ENCODE measurements at regions of chr19 and their contacts with region 1.

Region 1: DNA sequence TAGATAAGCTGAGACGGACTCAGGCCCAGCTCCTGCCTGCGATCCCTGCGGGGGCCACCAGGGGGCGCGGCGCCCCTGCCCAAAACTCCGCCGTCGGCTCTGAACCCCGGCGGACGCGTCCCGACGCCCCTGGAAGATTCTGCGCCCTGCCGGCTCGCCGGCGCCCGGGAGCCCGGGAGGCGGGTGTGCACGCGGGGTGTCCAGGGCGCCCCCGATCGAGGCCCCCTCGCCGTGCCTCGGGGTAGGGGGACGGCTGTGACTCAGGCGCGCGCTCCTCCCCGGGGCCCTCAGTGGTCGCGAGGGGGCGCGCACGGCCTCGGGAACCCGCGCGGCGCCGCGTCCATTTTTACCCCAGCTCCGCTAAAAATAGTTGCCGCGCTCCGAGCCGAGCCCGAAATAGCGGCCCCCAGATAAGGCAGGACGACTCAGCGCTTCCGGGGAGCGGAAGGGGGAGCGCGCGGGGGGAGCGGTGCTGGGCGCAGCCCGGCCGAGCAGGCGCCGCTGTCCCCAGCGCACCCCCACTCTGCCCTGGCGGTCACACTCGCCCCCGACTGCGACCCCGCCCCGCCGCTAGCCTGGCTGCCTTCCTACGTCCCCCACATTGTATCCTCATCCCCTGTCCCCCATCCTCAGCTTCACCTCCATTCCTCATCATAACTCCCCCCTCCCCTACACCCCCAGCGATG is 16.0 kb upstream of the ERCC1 start:
- DNase-seq: peak; percentile 90
- ATAC-seq: peak; percentile 81
- H3K4me3 Mint-ChIP-seq: peak overlapping the region; percentile 46
- H3K27ac Mint-ChIP-seq: peak overlapping the region; percentile 13
- H3K4me1 Mint-ChIP-seq: peaks cover 32% of the 10 kb centered on the region
- H3K27me3 Mint-ChIP-seq: no peaks in the 10 kb centered on the region
- CTCF ChIP-seq: peak; percentile 100

Region 2: DNA sequence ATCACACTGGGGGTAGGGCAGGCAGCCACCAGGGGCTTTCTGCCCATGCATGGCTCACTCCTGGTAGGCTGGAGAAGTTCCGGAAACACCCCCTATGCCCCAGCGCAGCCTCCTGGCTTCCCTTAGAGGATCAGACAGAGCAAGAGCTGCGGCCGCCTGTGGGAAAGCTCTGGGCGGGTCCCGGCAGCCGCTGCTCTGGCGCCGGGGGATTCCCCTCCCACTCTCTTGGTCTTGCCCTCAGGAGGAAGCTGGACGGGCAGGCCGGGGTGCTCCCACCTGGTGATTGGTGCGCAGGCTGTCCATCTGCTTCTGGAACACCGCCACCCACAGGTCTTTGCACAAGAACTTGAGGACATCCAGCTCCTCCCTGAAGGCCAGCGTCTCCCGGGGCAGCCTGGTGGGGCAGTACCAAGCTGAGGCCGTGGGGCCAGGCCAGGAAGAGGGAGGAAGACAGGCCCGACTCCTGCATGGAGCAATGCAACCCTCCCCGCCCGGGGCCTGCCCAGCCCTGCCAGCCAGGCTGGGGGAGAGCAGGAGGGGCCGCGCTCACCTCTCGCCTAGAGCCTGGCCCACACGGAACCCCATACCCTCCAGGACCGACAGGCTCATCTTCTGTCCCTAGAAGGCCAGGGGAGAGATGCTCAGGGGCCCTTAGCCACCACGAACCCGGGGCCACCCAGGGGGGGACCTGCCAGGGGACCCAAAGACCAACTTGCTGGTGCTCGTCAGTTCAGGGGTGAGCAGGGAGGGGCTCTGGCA is 275.0 kb before region 1 on chr19:
- CTCF ChIA-PET with region 1: no interaction called
- POLR2A ChIA-PET with region 1: no interaction called
- intact Hi-C with region 1: no loop called
- DNase-seq: peak; percentile 88
- ATAC-seq: peak; percentile 93
- H3K4me3 Mint-ChIP-seq: no peak overlapping the region
- H3K27ac Mint-ChIP-seq: peak overlapping the region; percentile 55
- H3K4me1 Mint-ChIP-seq: peaks cover 14% of the 10 kb centered on the region
- H3K27me3 Mint-ChIP-seq: no peaks in the 10 kb centered on the region
- CTCF ChIP-seq: no peak

Region 3: DNA sequence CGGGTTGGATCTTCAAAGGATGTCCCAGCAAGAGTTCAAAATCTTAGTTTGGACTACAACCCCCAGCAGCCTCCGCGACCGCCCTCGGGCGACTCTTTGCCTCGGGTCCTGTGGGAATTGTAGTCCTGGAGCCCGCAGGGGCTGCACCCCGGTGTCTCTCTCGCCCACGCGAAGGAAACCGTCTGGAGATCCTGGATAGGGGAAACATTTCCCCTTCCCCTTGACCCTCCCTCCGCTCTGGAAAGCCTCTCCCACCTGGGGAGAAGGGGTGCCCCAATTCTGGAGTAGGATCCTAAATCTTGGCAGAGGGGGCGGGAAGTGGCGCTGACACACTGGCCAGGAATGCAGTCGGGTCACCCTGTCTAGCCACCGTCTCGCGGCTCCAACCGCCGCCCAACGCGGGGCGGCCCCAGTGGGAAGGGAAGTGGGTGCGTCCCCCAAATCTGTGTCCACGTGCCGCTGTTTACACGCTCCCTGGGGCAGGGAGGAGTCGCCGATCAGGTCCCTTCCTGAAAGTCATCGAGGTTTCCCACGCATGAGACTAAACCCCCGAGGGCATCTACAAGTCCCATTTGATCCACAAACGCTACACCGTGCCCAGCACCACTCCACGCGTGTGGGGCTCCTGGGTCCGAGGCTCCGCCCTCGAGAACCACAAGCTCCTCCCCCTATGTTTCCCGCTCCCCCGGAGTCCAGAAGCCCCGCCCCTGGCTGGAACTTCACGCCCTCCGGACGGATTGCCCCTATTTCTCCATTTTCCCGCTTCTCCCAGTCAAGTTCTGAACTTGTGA is 34.1 kb before region 1 on chr19:
- CTCF ChIA-PET with region 1: interaction called, 10 read pairs
- POLR2A ChIA-PET with region 1: interaction called, 4 read pairs
- intact Hi-C with region 1: no loop called
- DNase-seq: peak; percentile 92
- ATAC-seq: peak; percentile 59
- H3K4me3 Mint-ChIP-seq: peak overlapping the region; percentile 93
- H3K27ac Mint-ChIP-seq: peak overlapping the region; percentile 88
- H3K4me1 Mint-ChIP-seq: peaks cover 36% of the 10 kb centered on the region
- H3K27me3 Mint-ChIP-seq: peaks cover 26% of the 10 kb centered on the region
- CTCF ChIP-seq: no peak

Region 4: GRCh38 chr19:45450012-45450333 is 10.3 kb after region 1 on chr19:
- CTCF ChIA-PET with region 1: interaction called, 36 read pairs
- POLR2A ChIA-PET with region 1: interaction called, 15 read pairs
- intact Hi-C with region 1: no loop called
- DNase-seq: no peak
- ATAC-seq: peak; percentile 20
- H3K4me3 Mint-ChIP-seq: peak overlapping the region; percentile 77
- H3K27ac Mint-ChIP-seq: peak overlapping the region; percentile 91
- H3K4me1 Mint-ChIP-seq: peaks cover 34% of the 10 kb centered on the region
- H3K27me3 Mint-ChIP-seq: no peaks in the 10 kb centered on the region
- CTCF ChIP-seq: no peak

Region 5: GRCh38 chr19:45469132-45469944 is 29.6 kb after region 1 on chr19:
- CTCF ChIA-PET with region 1: interaction called, 64 read pairs
- POLR2A ChIA-PET with region 1: interaction called, 14 read pairs
- intact Hi-C with region 1: no loop called
- DNase-seq: peak; percentile 96
- ATAC-seq: peak; percentile 75
- H3K4me3 Mint-ChIP-seq: peak overlapping the region; percentile 86
- H3K27ac Mint-ChIP-seq: peak overlapping the region; percentile 93
- H3K4me1 Mint-ChIP-seq: peaks cover 34% of the 10 kb centered on the region
- H3K27me3 Mint-ChIP-seq: peaks cover 5% of the 10 kb centered on the region
- CTCF ChIP-seq: no peak

Region 6: DNA sequence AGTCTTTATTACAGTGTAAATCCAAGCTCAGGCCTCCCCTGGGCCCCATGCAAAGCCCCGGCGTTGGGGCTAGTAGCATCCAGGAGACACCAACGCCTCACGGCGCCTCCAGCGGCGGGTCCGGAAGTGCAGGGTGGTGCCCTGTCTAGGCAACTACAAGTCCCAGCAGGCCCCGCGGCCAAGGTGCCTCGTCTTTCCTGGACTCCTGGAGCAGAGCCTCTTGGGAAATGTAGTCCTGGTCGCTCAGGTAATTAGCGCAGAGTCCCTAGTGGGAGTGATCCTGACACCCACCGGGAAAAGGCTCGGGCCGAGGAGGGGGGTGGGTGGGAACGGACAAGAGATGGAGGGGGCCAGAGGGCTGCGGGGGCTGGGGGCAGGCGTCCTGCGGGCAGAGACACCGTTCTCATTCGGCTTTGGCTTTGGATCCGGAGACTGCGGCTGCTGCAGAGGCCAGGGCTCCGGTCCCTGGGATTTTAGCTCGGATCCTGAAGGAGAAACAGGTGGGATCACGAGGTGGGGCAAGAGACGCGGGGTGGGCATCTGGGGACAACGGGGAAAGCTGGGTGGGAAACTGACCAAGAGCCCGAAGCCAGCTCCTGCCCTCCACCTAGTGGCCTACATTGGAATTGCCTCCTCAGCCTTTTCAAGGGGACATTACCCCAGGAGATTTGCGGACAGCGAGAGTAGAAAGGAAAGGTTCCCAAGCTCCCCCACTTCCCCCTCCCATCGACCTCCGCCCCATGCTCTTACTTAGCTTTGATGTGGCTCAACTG is 45.8 kb after region 1 on chr19:
- CTCF ChIA-PET with region 1: interaction called, 270 read pairs
- POLR2A ChIA-PET with region 1: interaction called, 9 read pairs
- intact Hi-C with region 1: no loop called
- DNase-seq: peak; percentile 100
- ATAC-seq: peak; percentile 99
- H3K4me3 Mint-ChIP-seq: peak overlapping the region; percentile 86
- H3K27ac Mint-ChIP-seq: peak overlapping the region; percentile 85
- H3K4me1 Mint-ChIP-seq: peaks cover 14% of the 10 kb centered on the region
- H3K27me3 Mint-ChIP-seq: peaks cover 2% of the 10 kb centered on the region
- CTCF ChIP-seq: peak; percentile 92

Region 7: DNA sequence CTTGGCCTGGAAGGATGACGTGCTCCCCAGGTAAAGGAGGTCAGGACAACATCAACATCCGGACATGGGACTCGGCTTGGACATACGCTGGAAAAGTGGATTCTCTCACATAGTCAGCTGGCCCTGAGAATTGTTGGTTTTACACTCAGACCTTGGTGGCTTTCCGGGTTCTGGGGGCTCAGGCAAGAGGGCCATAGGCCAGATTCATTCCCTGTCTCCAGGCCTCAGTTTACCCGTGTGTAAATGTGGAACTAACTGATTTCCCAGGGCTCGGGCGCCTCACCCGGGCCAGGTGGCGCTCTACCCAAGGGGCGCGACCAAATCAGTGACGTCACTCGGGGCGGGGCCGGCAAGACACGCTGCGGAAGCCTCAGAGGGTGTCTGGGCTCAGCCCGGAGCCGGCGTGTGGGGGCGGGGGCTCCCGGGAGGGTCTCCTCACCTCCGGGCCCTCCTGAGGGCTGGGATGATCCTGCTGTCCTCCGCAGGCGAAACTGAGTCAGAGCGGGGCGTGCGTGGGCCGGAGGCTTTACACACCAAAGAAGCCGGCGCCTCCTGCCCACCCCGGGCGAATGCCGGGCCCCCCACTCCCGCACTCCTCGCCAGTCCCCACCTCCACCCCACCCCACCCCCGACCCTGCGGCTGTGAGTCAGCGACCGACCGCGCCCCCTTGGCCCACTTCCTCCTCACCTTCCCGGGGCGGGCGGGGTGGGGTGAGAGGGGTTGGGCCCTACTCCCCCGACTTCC is 66.7 kb after region 1 on chr19:
- CTCF ChIA-PET with region 1: interaction called, 10 read pairs
- POLR2A ChIA-PET with region 1: no interaction called
- intact Hi-C with region 1: no loop called
- DNase-seq: peak; percentile 100
- ATAC-seq: peak; percentile 83
- H3K4me3 Mint-ChIP-seq: peak overlapping the region; percentile 96
- H3K27ac Mint-ChIP-seq: peak overlapping the region; percentile 95
- H3K4me1 Mint-ChIP-seq: peaks cover 33% of the 10 kb centered on the region
- H3K27me3 Mint-ChIP-seq: no peaks in the 10 kb centered on the region
- CTCF ChIP-seq: peak; percentile 45